ENCODE measurements at regions of chr3 and their contacts with region 1.

Region 1: GRCh38 chr3:160754855-160755747 is 930 bp upstream of the PPM1L start:
- DNase-seq: peak; percentile 97
- H3K4me3 ChIP-seq: peak overlapping the region; percentile 89 to 94 (median 92)
- H3K27ac ChIP-seq: peak overlapping the region; percentile 92 to 97 (median 96)
- H3K4me1 ChIP-seq: peaks cover 10 to 50% (median 43%) of the 10 kb centered on the region in 4 donors
- H3K27me3 ChIP-seq: no peaks in the 10 kb centered on the region
- CTCF ChIP-seq: no peak
- EP300 ChIP-seq: no peak
- POLR2A ChIP-seq: peak; percentile 29

Region 2: DNA sequence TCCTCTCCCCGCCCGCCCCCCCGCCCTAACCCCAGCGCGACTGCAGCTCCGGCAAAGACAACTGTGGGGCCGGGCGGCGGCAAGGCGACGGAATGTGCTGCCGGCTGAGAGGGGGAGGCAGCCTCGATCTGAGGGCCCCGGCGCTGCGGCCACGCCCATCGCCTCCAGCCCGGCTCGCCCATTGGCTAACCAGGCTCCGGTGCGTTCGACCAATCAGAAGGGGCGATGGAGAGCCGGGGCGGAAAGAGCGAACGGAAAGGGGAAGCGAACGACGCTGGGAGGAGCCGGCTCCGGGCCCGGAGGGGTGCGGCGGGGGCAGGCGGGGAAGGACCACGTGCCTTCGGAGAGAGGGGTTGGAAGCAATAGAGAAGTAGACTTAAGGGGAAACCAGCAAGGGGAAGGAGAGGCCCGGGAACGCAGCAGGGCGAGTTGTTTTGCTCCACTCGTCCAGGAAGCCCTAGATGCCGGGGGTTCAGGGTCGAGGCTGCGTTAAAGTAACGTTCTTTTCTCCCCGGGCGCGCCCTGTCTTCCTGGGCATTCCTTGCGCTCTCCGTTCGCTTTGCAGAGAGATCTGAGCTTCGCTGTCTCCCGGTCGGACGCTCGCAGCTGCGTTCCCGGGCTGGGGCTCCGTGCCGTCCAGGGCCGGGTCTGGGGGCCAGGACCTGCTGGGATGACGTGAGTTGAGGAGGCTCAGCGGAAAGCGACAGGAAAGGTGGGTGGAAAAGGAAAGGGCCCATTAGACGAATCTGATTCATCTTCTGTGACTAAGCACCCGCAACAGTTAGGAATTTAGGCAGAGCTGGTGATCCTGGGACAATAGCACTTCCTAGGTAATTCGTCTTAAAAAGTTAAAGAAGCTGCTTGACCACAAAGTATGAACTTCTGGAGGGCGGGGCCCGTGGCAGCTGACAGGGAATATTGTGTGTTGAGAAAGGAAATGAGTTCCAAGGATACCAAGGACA is 189.4 kb before region 1 on chr3 and contains the start of gene KPNA4:
- intact Hi-C with region 1: loop called (anchors 5 kb)
- DNase-seq: peak; percentile 99
- H3K4me3 ChIP-seq: peak within 1 kb of the TSS; percentile 85 to 96 (median 90)
- H3K27ac ChIP-seq: peak within 1 kb of the TSS; percentile 98 to 99 (median 99)
- H3K4me1 ChIP-seq: peaks cover 41 to 54% (median 48%) of the 10 kb centered on the region in 4 donors
- H3K27me3 ChIP-seq: no peaks in the 10 kb centered on the region
- CTCF ChIP-seq: no peak
- EP300 ChIP-seq: no peak
- POLR2A ChIP-seq: peak; percentile 62
- total RNA-seq, gene KPNA4: 48.2 to 60.6 (median 55.3) TPM

Region 3: DNA sequence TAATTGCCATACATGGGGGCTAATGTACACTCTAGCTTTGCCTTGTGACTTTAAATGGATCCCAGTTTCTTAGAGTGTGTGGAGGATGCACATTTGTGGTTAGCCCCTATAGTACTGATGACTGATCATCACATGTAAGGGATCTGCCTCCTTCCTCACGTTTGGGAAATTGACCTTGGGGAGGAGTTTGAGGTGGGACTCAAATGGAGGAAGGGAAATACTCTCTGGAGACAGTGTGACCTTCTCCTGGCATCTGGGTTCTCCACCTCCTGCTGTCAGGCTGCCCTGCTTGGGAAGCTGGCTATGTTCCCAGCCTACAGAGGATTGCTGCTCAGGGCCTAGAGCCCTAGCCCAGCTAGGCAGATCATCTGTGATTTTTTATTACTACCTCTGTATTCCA is 49.7 kb after region 1 on chr3:
- intact Hi-C with region 1: loop called (anchors 5 kb)
- DNase-seq: no peak
- H3K4me3 ChIP-seq: no peak overlapping the region
- H3K27ac ChIP-seq: peak overlapping the region; percentile 47 to 56 (median 52)
- H3K4me1 ChIP-seq: peaks cover 46 to 87% (median 69%) of the 10 kb centered on the region in 4 donors
- H3K27me3 ChIP-seq: no peaks in the 10 kb centered on the region
- CTCF ChIP-seq: no peak
- EP300 ChIP-seq: no peak
- POLR2A ChIP-seq: no peak

Region 4: DNA sequence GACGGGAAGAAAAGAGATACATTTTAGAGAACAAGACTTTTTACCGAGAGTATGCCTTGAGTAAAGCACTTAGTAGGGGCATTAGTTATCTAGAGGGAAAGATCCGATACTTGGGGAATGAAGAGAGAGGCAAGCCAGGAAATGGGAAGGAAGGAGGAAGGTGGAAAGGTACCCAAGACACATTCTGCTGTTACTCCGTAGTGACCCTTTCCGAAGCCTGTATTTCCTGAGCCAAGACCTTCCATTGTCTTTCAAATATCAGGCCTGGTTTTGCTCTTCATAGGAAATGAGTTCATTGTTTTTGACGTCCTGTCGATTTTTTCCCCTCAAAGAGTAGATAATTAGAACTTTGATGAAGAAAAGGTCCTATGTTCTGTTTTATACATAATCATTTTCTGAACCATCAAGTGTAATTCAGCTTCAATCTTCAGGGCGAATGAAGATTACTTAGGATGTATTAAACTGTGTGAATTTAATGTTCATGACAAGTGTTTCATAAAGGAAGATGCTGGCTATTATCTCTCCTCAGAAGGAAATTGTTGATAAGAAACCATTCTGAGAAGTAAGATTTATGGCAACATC is 96.6 kb after region 1 on chr3:
- intact Hi-C with region 1: no loop called
- DNase-seq: no peak
- H3K4me3 ChIP-seq: no peak overlapping the region
- H3K27ac ChIP-seq: no peak overlapping the region
- H3K4me1 ChIP-seq: no peaks in the 10 kb centered on the region
- H3K27me3 ChIP-seq: no peaks in the 10 kb centered on the region
- CTCF ChIP-seq: no peak
- EP300 ChIP-seq: no peak
- POLR2A ChIP-seq: no peak

Region 5: GRCh38 chr3:160876643-160877042 is 121.5 kb after region 1 on chr3:
- intact Hi-C with region 1: loop called (anchors 5 kb)
- DNase-seq: no peak
- H3K4me3 ChIP-seq: no peak overlapping the region
- H3K27ac ChIP-seq: no peak overlapping the region
- H3K4me1 ChIP-seq: peaks cover 10 to 35% (median 24%) of the 10 kb centered on the region in 4 donors
- H3K27me3 ChIP-seq: no peaks in the 10 kb centered on the region
- CTCF ChIP-seq: no peak
- EP300 ChIP-seq: no peak
- POLR2A ChIP-seq: no peak

Region 6: DNA sequence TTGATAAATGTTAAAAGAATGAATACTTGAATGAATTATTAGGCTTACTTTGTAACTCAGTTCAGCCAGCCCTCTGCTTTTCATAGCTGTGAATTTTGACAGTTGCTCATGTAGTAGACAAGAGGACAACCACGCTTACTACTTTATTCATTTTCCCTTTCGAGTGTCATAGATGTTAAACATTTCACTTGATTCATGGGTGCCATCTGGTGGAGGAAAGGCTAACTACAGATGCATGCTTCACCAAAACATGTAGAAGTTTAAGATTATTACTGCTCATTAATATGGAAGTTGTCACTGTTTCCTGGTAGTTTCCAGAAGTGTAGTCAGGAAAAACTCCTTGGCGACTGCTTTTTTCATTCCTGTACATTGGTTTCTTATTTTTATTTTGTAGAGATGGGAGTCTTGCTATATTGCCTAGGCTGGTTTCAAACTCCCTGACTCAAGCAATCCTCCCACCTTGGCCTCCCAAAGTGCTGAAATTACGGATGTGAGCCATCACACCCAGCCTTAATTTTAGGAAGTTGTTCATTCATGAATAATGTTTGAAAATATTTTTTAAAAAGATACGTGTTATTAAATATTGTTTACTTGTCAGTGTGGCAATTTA is 186.9 kb after region 1 on chr3:
- intact Hi-C with region 1: loop called (anchors 5 kb)
- DNase-seq: peak; percentile 94
- H3K4me3 ChIP-seq: no peak overlapping the region
- H3K27ac ChIP-seq: no peak overlapping the region
- H3K4me1 ChIP-seq: no peaks in the 10 kb centered on the region
- H3K27me3 ChIP-seq: no peaks in the 10 kb centered on the region
- CTCF ChIP-seq: peak; percentile 87 to 93 (median 91)
- EP300 ChIP-seq: no peak
- POLR2A ChIP-seq: no peak

Region 7: DNA sequence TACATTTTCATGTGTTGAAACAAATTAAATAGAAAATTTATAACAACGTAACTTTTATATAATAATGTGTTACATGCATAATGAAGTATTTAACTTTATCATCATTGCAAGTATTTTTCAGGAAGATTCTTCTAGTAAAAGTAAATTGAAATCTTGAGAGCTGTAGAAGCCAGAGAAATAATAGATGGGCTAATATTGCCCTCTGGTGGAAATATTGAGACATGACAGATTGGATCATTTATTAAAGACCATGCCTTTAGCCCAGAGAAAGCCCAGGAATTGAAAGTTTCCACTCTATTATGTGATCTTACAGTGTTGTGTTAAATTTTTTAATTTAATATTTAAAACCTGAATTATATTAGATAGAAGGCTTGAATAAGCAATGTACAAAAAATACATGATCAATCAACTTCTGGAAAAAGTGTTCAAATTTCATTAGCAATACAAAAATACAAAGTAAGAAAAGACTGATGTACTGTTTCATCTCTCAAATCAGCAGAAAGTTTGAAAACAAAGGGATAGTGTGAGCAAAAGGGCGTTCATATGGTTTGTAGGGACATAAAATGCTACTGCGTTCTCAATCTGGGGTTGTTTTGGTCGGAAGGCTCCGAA is 668.9 kb after region 1 on chr3:
- intact Hi-C with region 1: no loop called
- DNase-seq: no peak
- H3K4me3 ChIP-seq: no peak overlapping the region
- H3K27ac ChIP-seq: no peak overlapping the region
- H3K4me1 ChIP-seq: peaks cover 0 to 6% (median 0%) of the 10 kb centered on the region in 4 donors
- H3K27me3 ChIP-seq: no peaks in the 10 kb centered on the region
- CTCF ChIP-seq: peak; percentile 78 to 83 (median 83)
- EP300 ChIP-seq: no peak
- POLR2A ChIP-seq: no peak

Measured in esophagus muscularis mucosa (tissue), 4 donors.